Ascending aorta (tissue), 2 donors: ENCODE measurements at regions of chr3 and their contacts with region 1.

Region 1: GRCh38 chr3:126197854-126198584 is 17.6 kb upstream of the ALDH1L1 start:
- DNase-seq: peak in 1 of 2 donors; percentile 90
- H3K4me3 ChIP-seq: no peak overlapping the region
- H3K27ac ChIP-seq: no peak overlapping the region
- H3K4me1 ChIP-seq: peaks cover 0 to 3% of the 10 kb centered on the region in 2 donors
- H3K27me3 ChIP-seq: no peaks in the 10 kb centered on the region
- CTCF ChIP-seq: peak; percentile 61 to 81 (median 76)

Region 2: DNA sequence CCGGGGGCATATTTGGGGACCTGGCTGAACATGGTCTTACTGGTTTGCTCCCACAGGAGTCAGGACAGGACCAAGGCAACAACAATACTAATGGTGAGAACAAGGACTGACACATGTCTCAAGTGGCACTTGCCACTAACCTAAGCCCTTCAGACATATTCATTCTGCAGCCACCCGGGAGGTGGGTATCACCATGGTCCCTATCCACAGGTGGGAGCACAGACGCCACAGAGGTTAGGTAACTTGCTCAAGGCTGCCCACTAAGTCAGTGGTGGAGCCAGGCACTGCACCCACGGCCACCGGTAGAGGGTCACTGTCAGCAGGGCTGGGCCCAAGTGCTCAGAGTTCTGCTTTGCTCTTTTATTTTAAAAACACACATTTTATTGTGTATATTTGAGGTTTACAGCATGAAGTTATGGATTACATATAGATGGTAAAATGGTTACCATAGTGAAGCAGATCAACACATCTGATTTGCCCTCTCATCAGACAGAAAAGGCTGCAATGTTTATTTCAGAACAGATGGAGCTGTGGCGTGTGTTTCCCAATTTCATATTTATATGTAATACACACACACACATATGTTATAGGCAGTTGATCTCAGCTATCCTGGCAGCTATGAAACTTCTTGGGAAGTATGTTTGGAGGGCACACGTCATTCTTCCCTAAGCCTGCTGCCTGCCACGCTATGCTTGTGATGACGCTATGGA is 84.1 kb before region 1 on chr3:
- intact Hi-C with region 1: no loop called
- DNase-seq: peak in 1 of 2 donors; percentile 53
- H3K4me3 ChIP-seq: no peak overlapping the region
- H3K27ac ChIP-seq: no peak overlapping the region
- H3K4me1 ChIP-seq: no peaks in the 10 kb centered on the region
- H3K27me3 ChIP-seq: no peaks in the 10 kb centered on the region
- CTCF ChIP-seq: peak in 2 of 3 experiments; percentile 16 to 23

Region 3: DNA sequence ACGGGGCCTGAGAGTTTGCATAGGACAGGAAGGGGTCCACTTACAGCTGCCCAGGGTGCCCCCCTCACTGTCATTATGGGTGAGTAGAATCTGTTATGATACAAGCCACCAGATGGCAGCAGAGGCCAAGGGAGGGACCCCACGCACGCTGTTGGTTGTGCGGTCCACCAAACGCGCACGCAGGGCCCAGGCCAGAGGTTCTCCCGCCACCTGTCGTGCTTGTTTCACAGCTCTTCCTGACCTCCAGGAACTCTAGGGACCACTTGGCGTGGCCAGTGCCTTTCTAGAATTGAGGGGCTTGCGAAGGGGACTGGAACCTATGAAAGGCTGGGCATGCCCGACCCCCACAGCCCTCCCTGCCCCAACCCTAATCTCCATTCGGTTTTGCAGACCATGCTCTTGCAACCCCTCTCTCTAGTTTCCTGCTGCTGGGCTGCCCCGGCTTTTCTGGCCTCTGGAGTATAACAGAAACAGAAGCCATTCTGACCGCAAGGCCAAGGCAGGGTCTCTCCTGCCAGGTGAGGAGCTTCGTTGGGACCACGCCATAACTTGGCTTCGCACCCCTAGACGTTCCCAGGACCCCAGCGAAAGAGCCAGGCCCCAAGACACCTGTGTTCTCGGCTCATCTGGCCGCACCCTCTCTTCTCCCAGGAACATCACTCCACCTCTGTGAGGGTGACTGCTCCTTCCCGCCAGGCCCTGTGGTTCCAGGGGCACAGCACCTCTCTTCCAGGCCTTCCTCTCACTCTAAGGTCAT is 63.6 kb before region 1 on chr3:
- intact Hi-C with region 1: loop called (anchors 1 kb)
- DNase-seq: peak in 1 of 2 donors; percentile 80
- H3K4me3 ChIP-seq: no peak overlapping the region
- H3K27ac ChIP-seq: no peak overlapping the region
- H3K4me1 ChIP-seq: no peaks in the 10 kb centered on the region
- H3K27me3 ChIP-seq: no peaks in the 10 kb centered on the region
- CTCF ChIP-seq: peak; percentile 80 to 87 (median 81)

Region 4: DNA sequence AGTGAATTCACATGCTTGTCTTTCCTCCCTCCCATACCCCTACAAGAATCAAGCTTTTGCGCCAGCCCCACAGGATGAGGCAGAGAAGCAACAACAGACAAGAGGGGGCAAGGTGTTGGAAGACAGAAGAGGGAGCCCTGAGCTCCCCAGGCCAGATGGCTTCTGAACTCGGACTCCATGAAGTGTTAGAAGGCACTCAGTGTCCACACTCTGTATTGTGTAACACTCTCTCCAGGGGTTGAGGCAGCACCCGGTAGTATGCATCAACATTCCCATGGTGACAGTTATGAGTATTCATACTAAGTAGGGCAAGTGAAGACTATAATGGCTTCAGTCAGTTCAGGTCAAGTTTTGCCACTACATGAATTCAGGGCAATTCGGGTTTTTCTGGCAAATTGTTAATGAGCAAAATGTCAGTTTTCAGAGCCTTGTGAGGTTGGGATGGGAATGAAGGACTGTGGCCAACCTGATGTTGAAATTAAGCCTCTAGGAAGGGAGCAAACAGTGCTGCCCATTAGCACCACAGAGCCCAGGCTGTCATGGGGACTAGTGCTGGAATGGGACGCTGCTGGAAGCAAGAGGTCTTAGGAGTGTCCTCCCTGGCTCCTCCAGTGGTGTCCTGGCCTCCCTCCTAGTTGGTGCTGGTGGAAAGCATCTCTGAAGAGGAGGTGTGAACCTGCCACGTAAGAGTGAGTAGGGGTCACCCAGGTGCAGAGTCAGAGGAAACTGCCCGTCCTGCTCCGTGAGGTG is 79.8 kb after region 1 on chr3:
- intact Hi-C with region 1: no loop called
- DNase-seq: no peak
- H3K4me3 ChIP-seq: no peak overlapping the region
- H3K27ac ChIP-seq: no peak overlapping the region
- H3K4me1 ChIP-seq: no peaks in the 10 kb centered on the region
- H3K27me3 ChIP-seq: no peaks in the 10 kb centered on the region
- CTCF ChIP-seq: no peak